ENCODE measurements at regions of chr5 and their contacts with region 1.

Region 1: GRCh38 chr5:54646356-54647101 is 129.0 kb downstream of the SNX18 start:
- DNase-seq: peak; percentile 89
- H3K4me3 Mint-ChIP-seq: peak overlapping the region; percentile 59
- H3K27ac Mint-ChIP-seq: peak overlapping the region; percentile 99
- H3K4me1 Mint-ChIP-seq: peaks cover 55% of the 10 kb centered on the region
- H3K27me3 Mint-ChIP-seq: no peaks in the 10 kb centered on the region

Region 2: GRCh38 chr5:54673523-54674225 is 27.1 kb after region 1 on chr5:
- CTCF ChIA-PET with region 1: interaction called, 4 read pairs
- POLR2A ChIA-PET with region 1: interaction called, 13 read pairs
- DNase-seq: peak; percentile 82
- H3K4me3 Mint-ChIP-seq: no peak overlapping the region
- H3K27ac Mint-ChIP-seq: peak overlapping the region; percentile 63
- H3K4me1 Mint-ChIP-seq: peaks cover 78% of the 10 kb centered on the region
- H3K27me3 Mint-ChIP-seq: no peaks in the 10 kb centered on the region

Region 3: DNA sequence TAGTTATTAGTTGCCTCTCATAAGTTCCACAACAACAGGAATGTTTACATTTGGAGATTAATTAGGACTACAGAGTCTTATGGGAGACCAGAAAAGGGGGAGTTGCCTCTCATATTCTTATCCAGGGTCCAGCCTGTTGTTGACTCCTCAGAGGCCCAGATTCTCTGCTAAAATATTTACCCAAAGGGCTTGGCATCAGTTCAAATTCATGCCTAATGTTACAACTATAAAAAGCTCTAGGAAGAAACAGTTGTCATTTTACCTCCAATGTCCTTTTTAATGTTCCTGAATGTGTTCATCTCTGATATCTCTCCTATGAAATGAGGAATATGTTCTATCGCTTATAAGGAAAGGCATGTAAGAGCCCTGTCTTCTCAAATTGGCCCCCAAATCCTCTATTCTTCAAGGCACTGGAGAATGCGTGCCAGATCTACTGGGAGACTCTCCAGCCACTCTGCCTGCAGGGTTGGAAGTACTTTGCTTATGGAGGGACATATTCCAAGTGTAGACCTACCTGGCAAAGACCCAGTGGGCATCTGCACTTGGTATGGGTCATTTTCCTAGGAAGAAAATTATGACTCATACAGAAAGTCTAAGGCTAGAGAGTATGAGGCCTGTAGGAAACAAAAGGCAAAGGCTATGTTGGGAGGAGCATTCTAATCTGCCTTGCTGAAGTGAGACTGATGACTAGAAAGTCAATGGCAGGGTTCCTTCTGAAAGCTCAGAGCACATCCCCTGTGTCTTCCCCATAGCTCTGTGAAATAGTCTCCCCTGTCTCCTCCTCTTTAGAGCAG is 146.3 kb after region 1 on chr5:
- CTCF ChIA-PET with region 1: no interaction called
- POLR2A ChIA-PET with region 1: interaction called, 11 read pairs
- DNase-seq: no peak
- H3K4me3 Mint-ChIP-seq: no peak overlapping the region
- H3K27ac Mint-ChIP-seq: peak overlapping the region; percentile 42
- H3K4me1 Mint-ChIP-seq: peaks cover 42% of the 10 kb centered on the region
- H3K27me3 Mint-ChIP-seq: peaks cover 13% of the 10 kb centered on the region

Measured in activated CD4-positive, alpha-beta memory T cell treated with anti-CD3 and anti-CD28 coated beads, Interleukin-2, amount 10 ng/mL, durations not matched to agents 7 days and 5 days (primary cell).